ENCODE measurements at regions of chr2 and their contacts with region 1.

Region 1: DNA sequence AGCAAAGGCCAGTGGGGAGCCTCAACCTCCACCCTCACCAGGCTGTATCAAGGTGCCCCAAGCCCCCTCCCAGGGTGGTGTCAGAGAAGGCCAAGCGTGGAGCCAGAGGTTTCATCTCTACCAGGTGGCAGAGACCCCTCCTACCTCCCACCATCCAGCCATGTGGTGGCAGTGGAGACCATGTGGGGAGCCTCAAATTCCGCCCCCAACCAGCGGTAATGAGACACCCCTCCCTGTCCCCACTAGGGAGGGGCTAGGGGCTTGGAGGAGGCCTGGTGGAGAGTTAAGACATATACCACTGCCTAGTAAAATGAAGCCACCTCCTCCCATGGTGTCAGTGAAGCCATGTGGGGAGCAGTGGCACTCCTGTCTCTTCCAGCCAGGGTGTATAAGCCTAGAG is 24.4 kb upstream of the YPEL5 start:
- DNase-seq: no peak
- H3K4me3 ChIP-seq: no peak overlapping the region
- H3K27ac ChIP-seq: no peak overlapping the region
- H3K4me1 ChIP-seq: no peaks in the 10 kb centered on the region
- H3K27me3 ChIP-seq: no peaks in the 10 kb centered on the region
- CTCF ChIP-seq: no peak
- EP300 ChIP-seq: no peak
- POLR2A ChIP-seq: no peak

Region 2: GRCh38 chr2:30089171-30089570 is 33.2 kb before region 1 on chr2:
- intact Hi-C with region 1: loop called in 1 of 4 experiments (anchors 5 kb)
- DNase-seq: no peak
- H3K4me3 ChIP-seq: no peak overlapping the region
- H3K27ac ChIP-seq: no peak overlapping the region
- H3K4me1 ChIP-seq: no peaks in the 10 kb centered on the region
- H3K27me3 ChIP-seq: no peaks in the 10 kb centered on the region
- CTCF ChIP-seq: no peak
- EP300 ChIP-seq: no peak
- POLR2A ChIP-seq: no peak

Region 3: DNA sequence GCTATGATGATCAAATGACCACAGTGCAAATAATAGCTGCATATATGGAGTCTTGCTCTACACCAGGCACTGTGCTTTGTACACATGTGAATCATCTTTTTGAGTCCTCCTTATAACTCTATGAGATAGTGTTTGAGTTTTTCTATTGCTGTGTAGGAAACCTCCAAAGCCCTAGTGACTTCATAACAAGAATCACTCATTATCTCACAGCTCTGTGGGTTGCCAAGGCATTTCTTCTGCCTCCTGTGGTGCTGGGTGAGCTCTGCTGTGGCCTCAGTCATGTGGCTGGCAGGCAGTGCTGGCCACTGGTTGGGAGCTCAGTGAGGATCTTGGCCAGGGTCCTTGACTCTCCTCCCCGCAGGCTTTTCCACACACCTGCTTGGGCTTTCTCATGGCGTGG is 531.5 kb after region 1 on chr2:
- intact Hi-C with region 1: no loop called
- DNase-seq: no peak
- H3K4me3 ChIP-seq: no peak overlapping the region
- H3K27ac ChIP-seq: no peak overlapping the region
- H3K4me1 ChIP-seq: no peaks in the 10 kb centered on the region
- H3K27me3 ChIP-seq: no peaks in the 10 kb centered on the region
- CTCF ChIP-seq: no peak
- EP300 ChIP-seq: no peak
- POLR2A ChIP-seq: no peak